ENCODE measurements at regions of chr13 and their contacts with region 1.

Region 1: GRCh38 chr13:29508130-29508875 is 87.2 kb downstream of the SLC7A1 start:
- DNase-seq: peak; percentile 15 to 83 (median 61)
- ATAC-seq: peak; percentile 63 to 75 (median 72)
- H3K4me3 ChIP-seq: no peak overlapping the region
- H3K4me3 Mint-ChIP-seq: no peak overlapping the region
- H3K27ac ChIP-seq: no peak overlapping the region
- H3K27ac Mint-ChIP-seq: no peak overlapping the region
- H3K4me1 ChIP-seq: no peaks in the 10 kb centered on the region
- H3K4me1 Mint-ChIP-seq: peaks cover 0 to 2% (median 0%) of the 10 kb centered on the region in 3 donors
- H3K27me3 ChIP-seq: peaks cover 0 to 18% of the 10 kb centered on the region in 2 experiments
- H3K27me3 Mint-ChIP-seq: peaks cover 6 to 12% of the 10 kb centered on the region in 2 donors

Region 2: GRCh38 chr13:29484236-29484635 is 24.1 kb before region 1 on chr13:
- CTCF ChIA-PET with region 1: no interaction called
- POLR2A ChIA-PET with region 1: no interaction called
- DNase-seq: no peak
- ATAC-seq: no peak
- H3K4me3 ChIP-seq: no peak overlapping the region
- H3K4me3 Mint-ChIP-seq: no peak overlapping the region
- H3K27ac ChIP-seq: no peak overlapping the region
- H3K27ac Mint-ChIP-seq: no peak overlapping the region
- H3K4me1 ChIP-seq: no peaks in the 10 kb centered on the region
- H3K4me1 Mint-ChIP-seq: no peaks in the 10 kb centered on the region
- H3K27me3 ChIP-seq: peaks cover 0 to 14% of the 10 kb centered on the region in 2 experiments
- H3K27me3 Mint-ChIP-seq: peaks cover 13 to 17% of the 10 kb centered on the region in 2 donors

Region 3: GRCh38 chr13:29707876-29708543 is 199.7 kb after region 1 on chr13:
- CTCF ChIA-PET with region 1: interaction called, 10 to 15 read pairs
- POLR2A ChIA-PET with region 1: no interaction called
- DNase-seq: peak in 27 of 35 experiments; percentile 2 to 58 (median 27)
- ATAC-seq: peak; percentile 27 to 77 (median 54)
- H3K4me3 ChIP-seq: no peak overlapping the region
- H3K4me3 Mint-ChIP-seq: no peak overlapping the region
- H3K27ac ChIP-seq: no peak overlapping the region
- H3K27ac Mint-ChIP-seq: no peak overlapping the region
- H3K4me1 ChIP-seq: no peaks in the 10 kb centered on the region
- H3K4me1 Mint-ChIP-seq: no peaks in the 10 kb centered on the region
- H3K27me3 ChIP-seq: peaks cover 0 to 12% of the 10 kb centered on the region in 2 experiments
- H3K27me3 Mint-ChIP-seq: peaks cover 4 to 10% of the 10 kb centered on the region in 2 donors